Esophagus muscularis mucosa (tissue), 4 donors: ENCODE measurements at regions of chr7 and their contacts with region 1.

Region 1: GRCh38 chr7:143901668-143902331 is at the start of gene TCAF1:
- DNase-seq: peak; percentile 99
- H3K4me3 ChIP-seq: peak within 1 kb of the TSS; percentile 66 to 93 (median 86)
- H3K27ac ChIP-seq: peak within 1 kb of the TSS; percentile 89 to 95 (median 93)
- H3K4me1 ChIP-seq: peaks cover 23 to 56% (median 45%) of the 10 kb centered on the region in 4 donors
- H3K27me3 ChIP-seq: no peaks in the 10 kb centered on the region
- CTCF ChIP-seq: peak; percentile 11 to 34 (median 24)
- EP300 ChIP-seq: no peak
- POLR2A ChIP-seq: no peak
- total RNA-seq, gene TCAF1: 38.2 to 62.7 (median 52.4) TPM

Region 2: GRCh38 chr7:144027070-144027469 is 125.3 kb after region 1 on chr7:
- intact Hi-C with region 1: loop called (anchors 10 kb)
- DNase-seq: no peak
- H3K4me3 ChIP-seq: no peak overlapping the region
- H3K27ac ChIP-seq: no peak overlapping the region
- H3K4me1 ChIP-seq: no peaks in the 10 kb centered on the region
- H3K27me3 ChIP-seq: no peaks in the 10 kb centered on the region
- CTCF ChIP-seq: peak; percentile 34 to 51 (median 48)
- EP300 ChIP-seq: no peak
- POLR2A ChIP-seq: no peak